ENCODE measurements at regions of chr20 and their contacts with region 1.

Region 1: DNA sequence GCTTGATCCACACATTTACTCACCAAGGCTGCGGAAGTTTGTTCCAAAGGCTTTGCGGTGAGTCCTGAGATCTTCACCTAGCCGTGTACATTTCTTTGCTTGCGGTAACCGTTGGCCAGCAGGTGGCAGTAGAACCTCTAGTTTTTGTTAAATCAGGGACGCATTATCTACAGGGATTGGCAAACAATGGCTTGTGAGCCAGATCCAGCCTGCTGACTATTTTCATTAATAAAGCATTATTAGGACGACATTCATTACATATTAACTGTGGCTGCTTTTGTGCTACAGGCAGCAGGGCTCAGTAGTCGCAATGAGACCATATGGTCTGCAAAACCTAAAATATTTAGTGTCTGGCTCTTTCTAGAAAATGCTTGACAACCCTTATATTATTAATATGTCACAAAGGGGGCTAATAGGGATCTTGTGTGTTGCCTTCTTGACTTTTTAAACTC is 174.1 kb downstream of the DOK5 start:
- DNase-seq: peak; percentile 89

Region 2: DNA sequence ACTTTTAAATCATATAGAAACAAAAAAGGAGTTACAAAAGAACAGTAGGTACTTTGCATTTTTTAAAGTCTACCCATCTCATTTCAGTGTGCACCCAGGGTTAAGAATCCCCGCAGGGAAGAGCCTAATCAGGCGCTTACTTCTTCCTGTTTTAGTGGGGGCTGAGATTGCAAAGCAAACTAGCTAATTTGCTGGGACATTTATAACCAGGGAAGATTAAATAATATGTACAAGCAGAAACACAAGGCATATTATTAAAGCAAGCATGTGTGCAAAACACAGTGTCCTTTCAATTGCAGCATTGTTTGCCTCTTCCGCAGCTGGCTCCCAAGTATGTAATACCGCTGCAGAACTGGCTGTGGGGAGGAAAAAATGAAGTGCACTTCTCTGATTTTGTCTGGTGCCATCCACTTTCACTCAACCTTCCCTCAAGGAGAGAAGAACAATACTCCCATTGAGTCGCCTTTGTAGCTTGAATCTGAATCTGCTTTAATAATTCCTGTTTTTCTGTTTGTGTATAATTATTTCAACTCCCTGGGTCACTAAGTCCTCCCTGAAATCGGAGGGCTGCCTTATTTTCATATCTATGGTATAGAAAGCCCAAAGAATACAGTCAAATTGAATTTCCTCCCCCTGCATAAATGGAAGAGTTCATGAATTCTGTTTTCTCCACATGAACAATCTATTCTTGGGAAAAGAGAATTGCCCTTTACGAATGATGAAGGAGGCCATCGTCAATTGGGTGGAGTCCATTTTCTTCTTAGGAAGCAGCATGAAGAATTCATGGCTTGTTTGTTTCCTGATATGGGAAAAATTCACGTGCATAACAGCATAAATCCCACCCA is 555.9 kb before region 1 on chr20:
- intact Hi-C with region 1: loop called in 1 of 2 experiments (anchors 10 kb)
- DNase-seq: no peak

Region 3: DNA sequence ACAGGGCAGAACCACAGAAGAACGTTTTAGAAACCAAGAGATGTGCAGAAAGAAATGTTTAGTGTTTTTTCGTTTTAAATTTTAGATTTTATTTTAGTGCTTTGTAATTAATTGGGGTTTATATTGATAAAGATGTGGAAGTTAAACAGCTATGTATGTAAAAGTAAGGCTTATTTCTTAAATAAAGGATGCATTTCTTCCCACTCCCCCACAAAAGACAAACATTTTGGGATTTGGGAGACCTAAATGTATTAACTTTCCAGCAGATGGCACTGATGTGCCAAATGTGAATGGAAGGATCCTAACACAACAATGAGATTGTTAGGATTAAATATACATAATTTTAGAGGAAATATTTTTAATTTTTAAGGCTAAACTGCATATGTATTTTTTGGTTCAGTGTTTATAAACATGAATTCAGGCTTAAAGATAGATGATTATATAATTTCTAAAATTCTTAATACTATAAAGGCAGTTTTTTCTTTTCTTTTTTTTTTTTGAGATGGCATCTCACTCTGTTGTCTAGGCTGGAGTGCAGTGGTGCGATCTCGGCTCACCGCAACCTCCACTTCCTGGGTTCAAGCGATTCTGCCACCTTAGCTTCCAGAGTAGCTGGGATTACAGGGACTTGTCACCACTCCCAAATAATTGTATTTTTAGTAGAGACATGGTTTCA is 429.6 kb before region 1 on chr20:
- intact Hi-C with region 1: loop called in 1 of 2 experiments (anchors 10 kb)
- DNase-seq: no peak

Region 4: DNA sequence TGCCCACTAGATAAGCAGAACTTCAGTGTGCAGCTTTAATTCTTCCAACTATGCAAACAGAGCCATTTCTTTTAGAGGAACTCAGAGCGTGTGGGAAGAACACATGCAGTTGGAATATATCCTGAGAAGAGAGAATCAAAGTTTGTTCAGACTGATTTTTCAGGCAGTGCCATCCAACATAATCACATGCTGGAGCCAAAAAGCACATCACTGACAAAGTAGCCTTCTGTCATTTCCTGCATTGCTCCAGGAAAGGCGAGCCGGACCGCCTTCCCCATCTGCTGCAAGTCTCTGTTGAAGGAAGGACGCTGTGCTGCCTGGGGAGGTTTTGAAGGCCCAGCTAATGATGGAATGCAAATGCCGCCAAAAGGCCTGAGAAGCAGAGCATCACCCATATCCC is 75.7 kb before region 1 on chr20:
- intact Hi-C with region 1: loop called in 1 of 2 experiments (anchors 2 kb)
- DNase-seq: no peak

Region 5: DNA sequence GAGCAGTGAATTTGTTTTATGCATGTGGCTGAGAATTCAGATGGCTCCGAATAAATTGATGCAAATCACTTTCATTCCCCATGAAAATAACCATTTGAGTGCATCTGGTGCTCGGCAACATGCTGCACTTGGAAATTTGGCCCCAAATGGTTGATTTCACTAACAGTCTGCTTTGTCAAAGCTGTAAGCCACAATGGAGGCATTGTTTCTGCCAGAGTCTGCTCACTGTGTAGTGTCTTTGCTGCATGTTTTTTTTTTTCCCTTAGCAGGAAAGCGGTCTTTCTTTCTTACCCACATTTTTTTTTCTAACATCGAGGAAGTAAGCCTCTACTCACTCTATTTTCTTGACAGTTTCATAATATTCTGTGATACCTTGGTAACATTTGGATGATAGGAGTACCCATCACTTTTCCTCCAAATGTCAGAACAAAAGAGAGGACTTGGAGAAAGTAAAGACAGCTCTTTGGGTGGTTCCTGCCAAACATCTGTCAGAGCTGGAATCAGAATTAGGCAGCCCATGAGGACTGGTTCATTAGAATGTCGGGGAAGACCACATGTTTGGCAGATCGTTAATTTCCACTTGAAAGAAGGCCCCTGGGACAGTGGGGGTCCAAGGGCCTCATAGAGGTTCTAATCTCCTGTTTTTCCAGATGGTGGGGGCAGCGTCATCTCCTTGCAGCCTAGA is 24.7 kb before region 1 on chr20:
- intact Hi-C with region 1: no loop called
- DNase-seq: no peak

Region 6: DNA sequence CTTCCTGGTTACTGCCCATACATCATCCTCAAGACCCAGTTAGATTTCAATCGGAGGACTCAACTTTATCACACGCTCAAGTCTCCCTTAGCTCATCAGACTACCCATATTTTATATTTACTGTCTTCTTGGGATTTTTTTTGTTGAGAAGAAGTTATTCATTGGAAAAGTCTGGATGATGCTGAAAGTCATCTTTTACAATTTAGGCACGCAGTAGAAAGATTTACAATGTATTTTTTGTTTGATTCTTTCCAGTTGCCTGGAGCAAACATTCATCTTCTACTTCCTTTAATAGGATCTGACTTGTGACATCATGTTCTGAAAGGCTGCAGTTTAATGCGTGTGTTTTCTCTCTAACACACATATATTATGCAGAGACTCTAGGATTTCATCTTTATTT is 61.5 kb after region 1 on chr20:
- intact Hi-C with region 1: no loop called
- DNase-seq: no peak